CD4-positive, alpha-beta memory T cell (primary cell): ENCODE measurements at regions of chr6 and their contacts with region 1.

Region 1: DNA sequence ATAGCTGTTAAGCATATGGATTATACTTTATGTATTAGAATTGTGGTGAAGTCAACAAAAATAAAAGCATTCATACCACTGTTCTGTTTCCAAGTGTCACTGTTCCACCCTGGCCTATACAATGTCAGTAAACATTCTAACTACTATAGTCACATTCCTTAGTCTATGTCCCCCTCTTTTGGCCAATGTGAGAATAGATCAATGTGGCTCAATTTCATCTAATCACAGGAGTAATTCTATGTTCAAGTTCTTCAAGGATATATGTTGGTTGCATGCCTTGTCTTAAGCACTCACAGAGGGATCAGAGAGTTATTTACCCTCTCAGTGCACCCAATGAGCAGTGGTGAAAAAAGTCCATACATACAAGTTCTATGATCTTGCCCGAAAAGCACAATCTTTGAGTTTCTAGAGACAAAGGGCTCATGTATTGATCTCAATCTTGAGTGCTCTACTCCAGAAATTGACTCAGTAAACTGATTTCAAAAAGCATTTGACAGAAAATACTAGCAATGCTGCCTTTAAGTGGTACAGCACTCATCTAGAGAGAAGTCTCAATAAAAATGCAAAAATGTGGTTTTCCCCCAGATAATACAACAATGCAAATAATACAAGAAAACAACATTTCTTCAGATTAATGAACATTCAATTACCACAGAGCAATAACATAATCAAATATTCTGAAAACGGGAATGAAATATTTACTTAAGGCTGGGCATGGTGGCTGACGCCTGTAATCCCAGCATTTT is 16.5 kb downstream of the SMLR1 start:
- DNase-seq: peak in 4 of 5 donors; percentile 50 to 62 (median 60)
- H3K4me3 ChIP-seq: no peak overlapping the region
- H3K4me3 Mint-ChIP-seq: no peak overlapping the region
- H3K27ac ChIP-seq: no peak overlapping the region
- H3K27ac Mint-ChIP-seq: no peak overlapping the region
- H3K4me1 ChIP-seq: peaks cover under 1% of the 10 kb centered on the region
- H3K4me1 Mint-ChIP-seq: peaks cover 2 to 7% (median 5%) of the 10 kb centered on the region in 4 donors
- H3K27me3 ChIP-seq: no peaks in the 10 kb centered on the region
- H3K27me3 Mint-ChIP-seq: no peaks in the 10 kb centered on the region

Region 2: GRCh38 chr6:129498950-129499842 is 1344.6 kb before region 1 on chr6:
- CTCF ChIA-PET with region 1: interaction called, 4 read pairs
- POLR2A ChIA-PET with region 1: no interaction called
- intact Hi-C with region 1: loop called (anchors 1 kb)
- DNase-seq: peak; percentile 29 to 62 (median 55)
- H3K4me3 ChIP-seq: no peak overlapping the region
- H3K4me3 Mint-ChIP-seq: peak overlapping the region; percentile 37 to 89 (median 76)
- H3K27ac ChIP-seq: no peak overlapping the region
- H3K27ac Mint-ChIP-seq: peak overlapping the region in 5 of 7 donors; percentile 1 to 50 (median 19)
- H3K4me1 ChIP-seq: peaks cover 21% of the 10 kb centered on the region
- H3K4me1 Mint-ChIP-seq: peaks cover 15 to 24% (median 19%) of the 10 kb centered on the region in 4 donors
- H3K27me3 ChIP-seq: no peaks in the 10 kb centered on the region
- H3K27me3 Mint-ChIP-seq: no peaks in the 10 kb centered on the region

Region 3: DNA sequence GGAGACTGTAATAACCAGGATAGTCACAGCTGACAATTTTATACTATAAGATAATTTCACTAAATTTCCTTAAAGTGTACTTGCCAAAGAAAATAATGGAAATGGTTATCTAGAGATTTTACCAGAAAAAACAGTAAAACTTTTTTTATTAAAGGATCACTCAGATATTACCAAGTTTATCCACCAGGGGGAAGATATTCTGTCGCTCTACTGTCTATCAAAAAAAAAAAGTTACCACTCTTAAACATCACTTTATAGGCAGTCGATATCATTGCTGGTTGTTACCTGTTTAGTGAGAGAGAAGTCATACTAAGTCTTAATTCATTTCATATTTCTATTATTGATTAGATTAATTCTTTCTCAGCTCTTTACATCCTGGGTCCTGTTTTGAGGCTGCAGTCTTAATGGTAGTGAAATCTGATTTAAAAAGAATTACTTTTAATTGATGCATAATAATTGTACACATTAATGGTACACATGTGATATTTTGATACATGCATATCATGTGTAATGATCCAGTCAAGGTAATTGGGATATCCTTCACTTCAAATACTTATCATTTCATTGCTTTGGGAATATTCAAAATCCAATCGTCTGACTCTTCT is 806.4 kb before region 1 on chr6:
- CTCF ChIA-PET with region 1: no interaction called
- POLR2A ChIA-PET with region 1: no interaction called
- intact Hi-C with region 1: loop called (anchors 5 kb)
- DNase-seq: peak in 4 of 5 donors; percentile 21 to 38 (median 27)
- H3K4me3 ChIP-seq: no peak overlapping the region
- H3K4me3 Mint-ChIP-seq: no peak overlapping the region
- H3K27ac ChIP-seq: no peak overlapping the region
- H3K27ac Mint-ChIP-seq: no peak overlapping the region
- H3K4me1 ChIP-seq: peaks cover 54% of the 10 kb centered on the region
- H3K4me1 Mint-ChIP-seq: peaks cover 40 to 67% (median 58%) of the 10 kb centered on the region in 4 donors
- H3K27me3 ChIP-seq: no peaks in the 10 kb centered on the region
- H3K27me3 Mint-ChIP-seq: no peaks in the 10 kb centered on the region

Region 4: DNA sequence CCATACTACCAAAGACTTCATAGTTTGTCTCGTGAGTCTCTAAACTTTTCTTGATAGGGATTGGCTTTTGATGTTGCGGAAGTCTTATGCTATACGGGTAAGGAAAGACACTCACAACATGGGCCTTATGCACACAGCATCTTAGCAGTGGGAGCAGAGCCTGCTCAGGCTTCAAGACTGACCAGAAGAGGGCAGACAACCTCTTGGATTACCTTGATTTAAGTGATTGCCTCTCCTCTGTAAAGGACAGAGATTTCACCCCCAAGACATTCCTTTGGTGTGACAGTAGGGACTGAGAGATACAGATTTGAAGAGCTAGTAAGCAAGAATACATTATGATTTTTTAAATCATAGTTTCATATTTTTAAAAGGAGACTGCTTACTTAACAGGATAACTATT is 549.9 kb before region 1 on chr6:
- CTCF ChIA-PET with region 1: interaction called, 11 read pairs
- POLR2A ChIA-PET with region 1: no interaction called
- intact Hi-C with region 1: loop called (anchors 1 kb)
- DNase-seq: peak in 4 of 5 donors; percentile 35 to 45 (median 38)
- H3K4me3 ChIP-seq: no peak overlapping the region
- H3K4me3 Mint-ChIP-seq: no peak overlapping the region
- H3K27ac ChIP-seq: no peak overlapping the region
- H3K27ac Mint-ChIP-seq: no peak overlapping the region
- H3K4me1 ChIP-seq: no peaks in the 10 kb centered on the region
- H3K4me1 Mint-ChIP-seq: peaks cover 0 to 3% (median 0%) of the 10 kb centered on the region in 4 donors
- H3K27me3 ChIP-seq: no peaks in the 10 kb centered on the region
- H3K27me3 Mint-ChIP-seq: no peaks in the 10 kb centered on the region

Region 5: GRCh38 chr6:130365166-130366106 is 478.3 kb before region 1 on chr6 and contains the start of gene TMEM200A:
- CTCF ChIA-PET with region 1: interaction called, 3 read pairs
- POLR2A ChIA-PET with region 1: no interaction called
- intact Hi-C with region 1: loop called (anchors 1 kb)
- DNase-seq: peak; percentile 34 to 52 (median 36)
- H3K4me3 ChIP-seq: peak within 1 kb of the TSS in 1 of 2 donors; percentile 66
- H3K4me3 Mint-ChIP-seq: peak within 1 kb of the TSS; percentile 83 to 96 (median 87)
- H3K27ac ChIP-seq: peak within 1 kb of the TSS; percentile 55
- H3K27ac Mint-ChIP-seq: peak within 1 kb of the TSS in 6 of 7 donors; percentile 13 to 92 (median 64)
- H3K4me1 ChIP-seq: peaks cover 34% of the 10 kb centered on the region
- H3K4me1 Mint-ChIP-seq: peaks cover 20 to 37% (median 31%) of the 10 kb centered on the region in 4 donors
- H3K27me3 ChIP-seq: no peaks in the 10 kb centered on the region
- H3K27me3 Mint-ChIP-seq: no peaks in the 10 kb centered on the region
- total RNA-seq, gene TMEM200A: 1.1 to 1.2 TPM